Posterior cingulate gyrus (tissue), 11 donors: ENCODE measurements at regions of chr2 and their contacts with region 1.

Region 1: GRCh38 chr2:55168221-55169154 is 63.6 kb downstream of the CLHC1 start:
- DNase-seq: peak; percentile 46 to 95 (median 66)

Region 2: GRCh38 chr2:55120634-55121359 is 47.7 kb before region 1 on chr2:
- intact Hi-C with region 1: loop called (anchors 5 kb)
- DNase-seq: peak; percentile 65 to 97 (median 78)

Region 3: DNA sequence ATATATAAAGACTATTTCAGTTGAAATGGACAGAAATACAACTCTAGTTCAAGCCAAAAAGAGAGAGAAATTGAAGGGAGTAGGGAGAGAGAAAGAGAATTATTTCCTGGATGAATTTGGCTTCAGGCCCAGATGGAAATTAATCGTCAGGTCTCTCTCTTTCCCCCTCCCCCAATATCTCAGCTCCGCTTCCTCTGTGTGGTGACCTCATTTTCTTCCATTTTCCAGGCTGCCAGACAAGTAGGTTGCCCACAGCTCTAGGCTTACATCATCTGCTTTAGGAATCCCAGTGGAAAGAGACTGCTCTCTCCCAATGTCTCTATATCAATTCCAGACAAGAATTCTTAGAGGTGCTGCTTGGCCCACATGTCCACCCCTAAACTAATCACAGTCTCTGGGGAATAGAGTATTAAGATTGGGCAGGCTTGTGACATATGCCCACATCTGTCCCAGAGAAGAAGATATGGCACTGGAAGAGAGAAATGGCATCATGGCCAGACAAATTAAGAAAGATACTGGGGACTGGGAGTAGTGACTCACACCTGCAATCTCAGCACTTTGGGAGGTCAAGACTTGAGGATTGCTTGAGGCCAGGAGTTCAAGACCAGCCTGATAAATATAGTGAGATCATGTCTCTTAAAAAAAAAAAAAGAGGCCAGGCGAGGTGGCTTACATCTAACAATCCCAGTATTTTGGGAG is 313.8 kb after region 1 on chr2:
- intact Hi-C with region 1: no loop called
- DNase-seq: no peak